OCI-LY7 (cell line): ENCODE measurements at regions of chr6 and their contacts with region 1.

Region 1: DNA sequence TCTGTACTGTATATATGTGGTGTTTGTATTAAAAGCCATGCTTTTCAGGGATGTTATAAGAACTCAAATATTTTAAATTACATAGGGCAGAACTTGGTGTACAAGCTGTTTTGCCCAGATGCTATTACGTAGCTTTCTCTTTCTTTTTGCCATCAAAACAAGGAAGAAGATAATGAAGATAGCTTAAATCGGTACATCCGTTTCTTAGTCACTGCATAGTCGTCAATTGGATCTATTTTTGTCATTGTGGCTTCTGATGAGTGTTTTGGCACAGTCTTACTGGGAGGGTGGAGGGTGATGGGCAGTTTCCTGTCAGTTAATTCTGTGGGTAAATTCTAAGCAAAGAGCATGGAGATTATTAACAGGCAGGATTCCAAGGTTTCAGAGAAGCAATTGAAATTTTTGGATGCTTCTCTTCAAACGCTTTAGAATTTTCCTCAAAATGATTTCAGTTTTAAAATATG is 649.1 kb upstream of the GJE1 start:
- DNase-seq: peak; percentile 93
- H3K4me3 ChIP-seq: peak overlapping the region; percentile 59
- H3K27ac ChIP-seq: peak overlapping the region; percentile 90
- H3K4me1 ChIP-seq: peaks cover 66% of the 10 kb centered on the region
- CTCF ChIP-seq: no peak

Region 2: DNA sequence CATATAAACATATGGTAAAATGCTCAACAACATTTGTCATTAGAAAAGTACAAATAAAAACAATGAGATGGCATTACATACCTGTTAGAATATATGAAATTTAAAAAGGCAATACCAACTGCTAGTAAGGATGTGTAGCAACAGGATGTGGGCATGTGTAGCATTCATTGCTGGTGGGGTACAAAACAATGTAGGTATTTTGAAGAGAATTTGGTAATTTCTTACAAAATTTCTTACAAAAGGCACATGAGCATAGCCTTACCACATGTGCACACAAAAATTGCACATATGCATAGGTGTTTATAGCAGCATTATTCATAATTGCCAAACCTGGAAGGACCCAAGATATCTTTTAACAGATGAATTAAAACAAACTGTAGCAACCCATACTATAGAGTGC is 754.1 kb before region 1 on chr6:
- CTCF ChIA-PET with region 1: no interaction called
- POLR2A ChIA-PET with region 1: no interaction called
- intact Hi-C with region 1: loop called (anchors 10 kb)
- DNase-seq: no peak
- H3K4me3 ChIP-seq: no peak overlapping the region
- H3K27ac ChIP-seq: no peak overlapping the region
- H3K4me1 ChIP-seq: peaks cover 13% of the 10 kb centered on the region
- CTCF ChIP-seq: no peak

Region 3: GRCh38 chr6:141464490-141464889 is 19.1 kb before region 1 on chr6:
- CTCF ChIA-PET with region 1: interaction called, 4 read pairs
- POLR2A ChIA-PET with region 1: interaction called, 15 read pairs
- intact Hi-C with region 1: no loop called
- DNase-seq: peak; percentile 56
- H3K4me3 ChIP-seq: no peak overlapping the region
- H3K27ac ChIP-seq: no peak overlapping the region
- H3K4me1 ChIP-seq: peaks cover 8% of the 10 kb centered on the region
- CTCF ChIP-seq: no peak

Region 4: GRCh38 chr6:141498977-141499376 is 15.3 kb after region 1 on chr6:
- CTCF ChIA-PET with region 1: no interaction called
- POLR2A ChIA-PET with region 1: interaction called, 17 read pairs
- intact Hi-C with region 1: no loop called
- DNase-seq: no peak
- H3K4me3 ChIP-seq: no peak overlapping the region
- H3K27ac ChIP-seq: no peak overlapping the region
- H3K4me1 ChIP-seq: no peaks in the 10 kb centered on the region
- CTCF ChIP-seq: no peak

Region 5: DNA sequence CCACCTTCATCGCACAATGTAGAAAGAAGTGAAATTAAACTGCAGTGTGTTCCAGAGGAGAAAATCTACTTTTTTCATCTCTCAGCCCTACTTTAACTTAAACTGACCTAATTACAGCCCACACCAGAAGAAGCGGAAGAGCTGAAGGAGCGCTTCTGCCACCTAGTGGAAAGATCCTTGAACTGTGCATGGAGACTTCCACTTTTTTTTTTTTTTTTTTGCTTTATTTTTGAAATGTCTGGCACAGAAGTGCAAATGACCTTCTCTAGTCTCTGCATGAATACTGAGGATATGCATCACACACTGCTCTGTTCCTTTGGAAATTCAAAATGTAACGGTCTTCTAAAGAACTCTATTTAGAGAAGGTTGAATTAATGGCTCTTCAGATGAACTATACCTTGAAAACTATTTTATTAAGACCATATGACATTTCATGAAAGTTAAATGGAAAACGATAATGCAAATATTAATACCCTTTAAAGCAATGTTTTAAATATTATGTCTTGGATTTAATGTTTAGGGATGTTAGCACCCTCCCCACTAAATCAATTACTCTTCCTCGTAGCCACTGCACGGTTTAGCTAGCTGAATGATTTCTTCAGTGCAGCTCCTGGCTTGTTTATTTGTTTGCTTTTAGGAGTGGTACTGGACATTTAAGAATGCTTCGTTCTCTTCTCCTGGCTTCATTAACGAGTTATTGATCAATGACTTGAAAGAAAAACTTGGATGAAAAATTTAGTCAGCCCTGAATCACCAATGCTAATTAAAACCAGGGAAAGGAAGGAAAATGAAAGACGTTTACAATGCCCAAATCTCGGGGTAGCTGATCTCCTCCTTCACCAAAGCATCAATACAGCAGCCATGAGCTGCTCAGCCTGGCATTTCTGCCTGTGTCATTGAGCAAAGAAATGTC is 79.5 kb after region 1 on chr6:
- CTCF ChIA-PET with region 1: no interaction called
- POLR2A ChIA-PET with region 1: interaction called, 4 read pairs
- intact Hi-C with region 1: loop called (anchors 5 kb)
- DNase-seq: peak; percentile 84
- H3K4me3 ChIP-seq: peak overlapping the region; percentile 33
- H3K27ac ChIP-seq: peak overlapping the region; percentile 43
- H3K4me1 ChIP-seq: peaks cover 16% of the 10 kb centered on the region
- CTCF ChIP-seq: peak; percentile 95